Activated CD4-positive, alpha-beta memory T cell treated with anti-CD3 and anti-CD28 coated beads for 36 hours (primary cell): ENCODE measurements at regions of chr1 and their contacts with region 1.

Region 1: GRCh38 chr1:67214420-67215174 is 48.3 kb downstream of the IL23R start:
- DNase-seq: peak; percentile 62
- H3K4me3 Mint-ChIP-seq: no peak overlapping the region
- H3K27ac Mint-ChIP-seq: no peak overlapping the region
- H3K4me1 Mint-ChIP-seq: peaks cover 46% of the 10 kb centered on the region
- H3K27me3 Mint-ChIP-seq: no peaks in the 10 kb centered on the region

Region 2: DNA sequence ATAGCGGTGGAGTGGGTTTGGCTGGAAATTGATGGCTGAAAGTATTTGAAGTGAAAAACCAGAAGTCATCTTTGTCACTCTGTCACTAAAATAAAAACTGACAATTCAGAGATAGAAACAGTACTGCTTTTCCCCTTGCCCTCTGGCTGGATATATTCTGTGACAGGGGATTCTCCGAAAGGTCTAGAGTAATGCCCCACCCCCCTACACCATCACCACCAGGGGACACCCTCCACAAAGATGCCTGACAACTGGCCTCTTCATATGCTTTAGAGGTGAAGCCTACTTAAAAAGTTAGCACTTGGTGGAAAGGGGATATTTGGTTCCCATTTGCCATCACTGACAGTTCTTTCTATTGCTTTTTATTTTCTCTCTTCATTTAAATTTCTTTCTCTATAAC is 607.1 kb before region 1 on chr1:
- CTCF ChIA-PET with region 1: no interaction called
- POLR2A ChIA-PET with region 1: no interaction called
- intact Hi-C with region 1: no loop called
- DNase-seq: no peak
- H3K4me3 Mint-ChIP-seq: no peak overlapping the region
- H3K27ac Mint-ChIP-seq: no peak overlapping the region
- H3K4me1 Mint-ChIP-seq: no peaks in the 10 kb centered on the region
- H3K27me3 Mint-ChIP-seq: peaks cover 16% of the 10 kb centered on the region

Region 3: DNA sequence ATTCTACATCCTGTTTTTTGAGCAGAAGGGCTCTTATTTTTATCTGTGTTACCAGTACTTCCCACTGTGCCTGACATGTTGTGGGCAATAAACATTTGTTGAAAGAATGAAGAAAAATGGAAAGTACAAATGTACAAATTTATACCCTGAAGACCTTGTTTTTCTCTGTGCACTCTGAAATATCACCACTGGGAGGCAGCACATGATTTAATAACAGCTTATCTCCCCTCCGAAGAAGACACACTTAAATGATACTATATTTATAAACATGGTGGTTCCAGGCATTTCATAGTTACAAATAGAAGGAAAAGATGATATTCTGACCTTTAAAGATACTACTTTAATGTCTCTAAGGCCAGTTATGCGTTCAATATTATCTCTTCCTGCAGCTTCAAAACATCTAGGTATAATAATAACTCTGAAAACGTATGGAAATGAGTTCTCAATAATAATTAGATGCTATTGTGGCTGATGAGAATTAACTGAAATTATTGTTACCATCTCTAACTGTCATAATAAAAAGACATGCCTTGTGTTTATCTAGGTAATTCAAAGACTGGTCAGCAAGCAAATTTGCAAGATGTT is 449.5 kb before region 1 on chr1:
- CTCF ChIA-PET with region 1: interaction called, 38 read pairs
- POLR2A ChIA-PET with region 1: no interaction called
- intact Hi-C with region 1: loop called (anchors 5 kb)
- DNase-seq: peak; percentile 52
- H3K4me3 Mint-ChIP-seq: no peak overlapping the region
- H3K27ac Mint-ChIP-seq: no peak overlapping the region
- H3K4me1 Mint-ChIP-seq: peaks cover 17% of the 10 kb centered on the region
- H3K27me3 Mint-ChIP-seq: no peaks in the 10 kb centered on the region

Region 4: GRCh38 chr1:67162957-67163356 is 51.6 kb before region 1 on chr1:
- CTCF ChIA-PET with region 1: interaction called, 59 read pairs
- POLR2A ChIA-PET with region 1: interaction called, 6 read pairs
- intact Hi-C with region 1: no loop called
- DNase-seq: peak; percentile 78
- H3K4me3 Mint-ChIP-seq: peak overlapping the region; percentile 30
- H3K27ac Mint-ChIP-seq: peak overlapping the region; percentile 73
- H3K4me1 Mint-ChIP-seq: peaks cover 56% of the 10 kb centered on the region
- H3K27me3 Mint-ChIP-seq: peaks cover 5% of the 10 kb centered on the region

Region 5: GRCh38 chr1:67239738-67240137 is 25.1 kb after region 1 on chr1:
- CTCF ChIA-PET with region 1: interaction called, 30 read pairs
- POLR2A ChIA-PET with region 1: no interaction called
- intact Hi-C with region 1: no loop called
- DNase-seq: no peak
- H3K4me3 Mint-ChIP-seq: no peak overlapping the region
- H3K27ac Mint-ChIP-seq: no peak overlapping the region
- H3K4me1 Mint-ChIP-seq: peaks cover 12% of the 10 kb centered on the region
- H3K27me3 Mint-ChIP-seq: peaks cover 2% of the 10 kb centered on the region

Region 6: DNA sequence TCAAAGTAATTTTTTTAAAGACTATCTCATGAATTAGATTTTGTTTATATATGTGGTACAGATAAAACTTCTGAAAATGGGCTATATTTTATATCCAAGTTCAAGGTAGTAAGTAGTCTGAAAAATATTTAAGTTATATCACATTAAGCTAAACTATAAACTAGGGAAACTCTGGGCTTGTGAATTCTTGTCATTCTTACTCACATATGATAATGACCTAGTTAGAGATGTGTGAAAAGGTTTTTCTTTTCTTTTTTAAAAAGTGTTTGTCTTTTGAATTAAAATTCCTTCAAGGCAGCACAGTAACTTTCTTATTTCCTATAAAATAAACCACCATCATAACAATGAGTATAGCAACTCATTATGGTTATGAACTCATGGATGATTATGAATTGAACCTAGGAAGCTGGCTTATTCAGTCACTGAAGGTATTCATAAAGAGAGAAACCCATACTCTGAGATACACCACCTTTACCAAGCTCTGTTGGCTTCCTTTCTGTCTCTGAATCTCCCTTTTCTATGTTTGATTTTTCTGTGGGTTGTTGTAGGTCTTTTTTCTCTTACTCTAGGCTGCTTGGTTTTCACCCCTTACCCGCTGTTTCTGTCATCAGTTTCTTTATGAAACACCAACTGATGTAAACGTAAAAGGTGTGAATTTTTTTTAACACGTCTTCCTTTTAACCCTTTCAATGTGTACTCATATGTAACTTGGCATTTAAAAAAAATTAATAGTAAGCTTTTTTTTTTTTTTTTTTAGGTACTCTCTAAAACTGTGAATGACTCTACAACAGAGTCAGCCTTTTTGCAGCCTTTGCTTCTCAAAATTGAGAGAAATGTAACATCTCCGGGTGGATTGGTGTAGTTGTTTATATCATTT is 118.3 kb after region 1 on chr1:
- CTCF ChIA-PET with region 1: interaction called, 25 read pairs
- POLR2A ChIA-PET with region 1: no interaction called
- intact Hi-C with region 1: no loop called
- DNase-seq: no peak
- H3K4me3 Mint-ChIP-seq: peak overlapping the region; percentile 9
- H3K27ac Mint-ChIP-seq: peak overlapping the region; percentile 82
- H3K4me1 Mint-ChIP-seq: peaks cover 80% of the 10 kb centered on the region
- H3K27me3 Mint-ChIP-seq: no peaks in the 10 kb centered on the region

Region 7: GRCh38 chr1:67479146-67479891 is 264.7 kb after region 1 on chr1:
- CTCF ChIA-PET with region 1: interaction called, 11 read pairs
- POLR2A ChIA-PET with region 1: no interaction called
- intact Hi-C with region 1: no loop called
- DNase-seq: peak; percentile 48
- H3K4me3 Mint-ChIP-seq: no peak overlapping the region
- H3K27ac Mint-ChIP-seq: no peak overlapping the region
- H3K4me1 Mint-ChIP-seq: peaks cover 9% of the 10 kb centered on the region
- H3K27me3 Mint-ChIP-seq: no peaks in the 10 kb centered on the region